Endothelial cell of umbilical vein (primary cell): ENCODE measurements at regions of chr12 and their contacts with region 1.

Region 1: GRCh38 chr12:3073438-3074250 is 3.5 kb upstream of the TSPAN9 start:
- DNase-seq: peak; percentile 90
- H3K4me3 ChIP-seq: no peak overlapping the region
- H3K27ac ChIP-seq: no peak overlapping the region
- H3K4me1 ChIP-seq: peaks cover 20% of the 10 kb centered on the region
- H3K27me3 ChIP-seq: peaks cover 0 to 3% of the 10 kb centered on the region in 2 experiments
- CTCF ChIP-seq: peak; percentile 94 to 98
- POLR2A ChIP-seq: no peak

Region 2: GRCh38 chr12:2930865-2931264 is 142.8 kb before region 1 on chr12:
- CTCF ChIA-PET with region 1: no interaction called
- POLR2A ChIA-PET with region 1: no interaction called
- dilution Hi-C with region 1: no loop called
- intact Hi-C with region 1: no loop called
- DNase-seq: peak; percentile 76
- H3K4me3 ChIP-seq: no peak overlapping the region
- H3K27ac ChIP-seq: peak overlapping the region; percentile 27
- H3K4me1 ChIP-seq: peaks cover 7% of the 10 kb centered on the region
- H3K27me3 ChIP-seq: no peaks in the 10 kb centered on the region
- CTCF ChIP-seq: no peak
- POLR2A ChIP-seq: no peak

Region 3: GRCh38 chr12:3083921-3084347 is 10.3 kb after region 1 on chr12:
- CTCF ChIA-PET with region 1: interaction called, 9 read pairs
- POLR2A ChIA-PET with region 1: interaction called, 10 read pairs
- dilution Hi-C with region 1: no loop called
- intact Hi-C with region 1: no loop called
- DNase-seq: peak; percentile 33
- H3K4me3 ChIP-seq: no peak overlapping the region
- H3K27ac ChIP-seq: peak overlapping the region; percentile 21
- H3K4me1 ChIP-seq: peaks cover 15% of the 10 kb centered on the region
- H3K27me3 ChIP-seq: no peaks in the 10 kb centered on the region
- CTCF ChIP-seq: no peak
- POLR2A ChIP-seq: no peak

Region 4: DNA sequence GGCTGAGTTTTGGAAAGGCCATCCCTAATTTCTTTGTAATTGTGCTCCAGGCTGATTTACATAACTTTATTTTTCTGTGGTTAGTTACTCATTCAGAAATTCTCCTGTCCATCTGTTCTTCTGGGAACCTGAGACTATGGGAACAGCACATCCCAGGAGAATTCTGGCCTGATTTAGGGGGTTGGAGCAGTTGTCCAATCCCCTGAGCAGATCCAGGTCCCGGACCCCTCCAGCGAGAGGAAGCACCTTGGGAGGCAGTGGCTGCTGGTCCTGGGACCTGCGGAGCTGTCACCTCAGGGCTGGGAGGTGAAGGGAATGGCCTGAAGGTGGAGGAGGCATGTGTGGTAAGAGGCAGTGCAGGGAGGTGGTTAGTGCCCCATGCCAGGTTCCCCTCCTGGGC is 44.0 kb after region 1 on chr12:
- CTCF ChIA-PET with region 1: interaction called, 62 read pairs
- POLR2A ChIA-PET with region 1: interaction called, 3 read pairs
- dilution Hi-C with region 1: no loop called
- intact Hi-C with region 1: loop called (anchors 1 kb)
- DNase-seq: no peak
- H3K4me3 ChIP-seq: no peak overlapping the region
- H3K27ac ChIP-seq: peak overlapping the region; percentile 72
- H3K4me1 ChIP-seq: peaks cover 26% of the 10 kb centered on the region
- H3K27me3 ChIP-seq: no peaks in the 10 kb centered on the region
- CTCF ChIP-seq: no peak
- POLR2A ChIP-seq: no peak

Region 5: GRCh38 chr12:3135522-3136461 is 62.1 kb after region 1 on chr12:
- CTCF ChIA-PET with region 1: interaction called, 65 read pairs
- POLR2A ChIA-PET with region 1: no interaction called
- dilution Hi-C with region 1: no loop called
- intact Hi-C with region 1: loop called (anchors 1 kb)
- DNase-seq: peak; percentile 69
- H3K4me3 ChIP-seq: no peak overlapping the region
- H3K27ac ChIP-seq: no peak overlapping the region
- H3K4me1 ChIP-seq: peaks cover 11% of the 10 kb centered on the region
- H3K27me3 ChIP-seq: no peaks in the 10 kb centered on the region
- CTCF ChIP-seq: peak; percentile 75 to 79
- POLR2A ChIP-seq: no peak

Region 6: DNA sequence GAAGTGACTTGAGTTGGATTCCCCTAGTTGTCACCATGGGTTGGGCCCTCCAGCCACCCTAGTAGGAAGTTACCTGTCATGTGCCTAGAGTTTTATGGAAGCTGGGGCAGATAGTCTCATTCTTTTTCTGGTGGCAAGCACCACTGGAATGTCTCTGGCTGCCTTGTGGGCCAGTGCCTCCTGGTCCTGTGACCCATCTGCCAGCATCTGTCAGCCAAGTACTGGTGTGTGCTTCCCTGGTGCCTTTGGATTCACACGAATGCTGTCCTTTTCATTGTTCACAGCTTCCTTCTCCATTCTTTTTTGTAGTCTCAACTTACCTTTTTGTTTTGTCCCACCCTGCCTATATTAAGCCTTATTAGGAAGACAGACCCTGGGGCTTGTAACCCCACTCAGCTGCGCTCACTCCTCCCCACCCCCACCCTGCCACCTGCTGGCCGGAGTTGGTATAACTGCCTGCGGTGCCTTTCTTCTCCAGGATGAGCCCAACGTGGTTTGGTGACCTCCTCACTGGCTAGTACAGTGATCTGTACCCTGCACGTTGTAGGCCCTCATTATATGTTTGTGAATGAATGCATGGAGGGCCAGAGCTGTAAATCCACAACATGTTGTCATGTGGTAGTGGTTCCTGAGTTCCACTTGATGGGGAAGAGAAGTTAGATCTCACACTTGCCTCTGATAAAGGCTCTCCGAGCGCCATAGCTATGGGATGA is 129.2 kb after region 1 on chr12:
- CTCF ChIA-PET with region 1: interaction called, 16 read pairs
- POLR2A ChIA-PET with region 1: no interaction called
- dilution Hi-C with region 1: no loop called
- intact Hi-C with region 1: loop called (anchors 1 kb)
- DNase-seq: peak; percentile 58
- H3K4me3 ChIP-seq: no peak overlapping the region
- H3K27ac ChIP-seq: no peak overlapping the region
- H3K4me1 ChIP-seq: peaks cover 22% of the 10 kb centered on the region
- H3K27me3 ChIP-seq: peaks cover 2 to 11% of the 10 kb centered on the region in 2 experiments
- CTCF ChIP-seq: peak; percentile 93 to 98
- POLR2A ChIP-seq: no peak

Region 7: GRCh38 chr12:3791256-3792252 is 717.9 kb after region 1 on chr12:
- CTCF ChIA-PET with region 1: no interaction called
- POLR2A ChIA-PET with region 1: no interaction called
- dilution Hi-C with region 1: no loop called
- intact Hi-C with region 1: no loop called
- DNase-seq: no peak
- H3K4me3 ChIP-seq: no peak overlapping the region
- H3K27ac ChIP-seq: no peak overlapping the region
- H3K4me1 ChIP-seq: no peaks in the 10 kb centered on the region
- H3K27me3 ChIP-seq: peaks cover 1 to 4% of the 10 kb centered on the region in 2 experiments
- CTCF ChIP-seq: no peak
- POLR2A ChIP-seq: no peak

Region 8: DNA sequence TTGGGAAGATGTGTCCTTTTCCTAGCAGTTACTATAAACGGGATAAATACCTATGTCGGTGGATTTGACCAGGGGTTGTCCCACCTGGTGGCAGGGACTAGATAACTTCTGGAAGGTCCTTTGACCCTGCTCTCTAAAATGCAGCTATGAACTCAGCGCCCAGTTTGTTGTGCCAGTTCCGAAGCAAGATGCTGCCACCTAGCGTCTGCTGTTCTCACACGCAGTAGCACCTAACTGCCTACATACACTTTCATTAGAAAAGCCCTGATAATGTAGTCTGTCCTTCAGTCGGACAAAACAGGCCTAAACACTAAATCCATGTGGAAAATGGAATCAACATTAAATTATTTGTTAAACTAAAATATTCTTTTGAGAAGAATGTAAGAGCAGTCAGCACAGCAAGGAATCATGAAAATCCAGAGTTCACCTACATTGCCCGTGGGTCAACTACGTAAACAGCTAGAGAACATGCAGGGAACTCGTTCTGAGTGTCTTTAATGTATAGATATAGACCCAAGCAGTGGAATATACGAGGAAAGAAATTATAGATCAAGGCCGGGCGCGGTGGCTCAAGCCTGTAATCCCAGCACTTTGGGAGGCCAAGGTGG is 730.3 kb after region 1 on chr12:
- CTCF ChIA-PET with region 1: no interaction called
- POLR2A ChIA-PET with region 1: no interaction called
- dilution Hi-C with region 1: no loop called
- intact Hi-C with region 1: loop called (anchors 1 kb)
- DNase-seq: peak; percentile 59
- H3K4me3 ChIP-seq: no peak overlapping the region
- H3K27ac ChIP-seq: no peak overlapping the region
- H3K4me1 ChIP-seq: no peaks in the 10 kb centered on the region
- H3K27me3 ChIP-seq: no peaks in the 10 kb centered on the region
- CTCF ChIP-seq: peak; percentile 88 to 90
- POLR2A ChIP-seq: no peak